ENCODE measurements at regions of chr1 and their contacts with region 1.

Region 1: GRCh38 chr1:9110669-9111356 is 18.1 kb downstream of the GPR157 start:
- DNase-seq: peak; percentile 34
- H3K4me3 ChIP-seq: no peak overlapping the region
- CTCF ChIP-seq: peak; percentile 92

Region 2: GRCh38 chr1:8910914-8911313 is 199.9 kb before region 1 on chr1:
- CTCF ChIA-PET with region 1: interaction called, 267 read pairs
- POLR2A ChIA-PET with region 1: no interaction called
- DNase-seq: no peak
- H3K4me3 ChIP-seq: no peak overlapping the region
- CTCF ChIP-seq: no peak

Region 3: GRCh38 chr1:8953448-8953847 is 157.4 kb before region 1 on chr1:
- CTCF ChIA-PET with region 1: no interaction called
- POLR2A ChIA-PET with region 1: no interaction called
- DNase-seq: no peak
- H3K4me3 ChIP-seq: no peak overlapping the region
- CTCF ChIP-seq: no peak

Region 4: GRCh38 chr1:9128520-9129265 is 17.9 kb after region 1 on chr1 and contains the start of gene GPR157:
- CTCF ChIA-PET with region 1: interaction called, 45 read pairs
- POLR2A ChIA-PET with region 1: no interaction called
- DNase-seq: no peak
- H3K4me3 ChIP-seq: peak within 1 kb of the TSS; percentile 57
- CTCF ChIP-seq: peak; percentile 21

Region 5: GRCh38 chr1:9181176-9181906 is 70.5 kb after region 1 on chr1:
- CTCF ChIA-PET with region 1: interaction called, 13 read pairs
- POLR2A ChIA-PET with region 1: no interaction called
- DNase-seq: no peak
- H3K4me3 ChIP-seq: peak overlapping the region; percentile 87
- CTCF ChIP-seq: peak; percentile 99

Region 6: DNA sequence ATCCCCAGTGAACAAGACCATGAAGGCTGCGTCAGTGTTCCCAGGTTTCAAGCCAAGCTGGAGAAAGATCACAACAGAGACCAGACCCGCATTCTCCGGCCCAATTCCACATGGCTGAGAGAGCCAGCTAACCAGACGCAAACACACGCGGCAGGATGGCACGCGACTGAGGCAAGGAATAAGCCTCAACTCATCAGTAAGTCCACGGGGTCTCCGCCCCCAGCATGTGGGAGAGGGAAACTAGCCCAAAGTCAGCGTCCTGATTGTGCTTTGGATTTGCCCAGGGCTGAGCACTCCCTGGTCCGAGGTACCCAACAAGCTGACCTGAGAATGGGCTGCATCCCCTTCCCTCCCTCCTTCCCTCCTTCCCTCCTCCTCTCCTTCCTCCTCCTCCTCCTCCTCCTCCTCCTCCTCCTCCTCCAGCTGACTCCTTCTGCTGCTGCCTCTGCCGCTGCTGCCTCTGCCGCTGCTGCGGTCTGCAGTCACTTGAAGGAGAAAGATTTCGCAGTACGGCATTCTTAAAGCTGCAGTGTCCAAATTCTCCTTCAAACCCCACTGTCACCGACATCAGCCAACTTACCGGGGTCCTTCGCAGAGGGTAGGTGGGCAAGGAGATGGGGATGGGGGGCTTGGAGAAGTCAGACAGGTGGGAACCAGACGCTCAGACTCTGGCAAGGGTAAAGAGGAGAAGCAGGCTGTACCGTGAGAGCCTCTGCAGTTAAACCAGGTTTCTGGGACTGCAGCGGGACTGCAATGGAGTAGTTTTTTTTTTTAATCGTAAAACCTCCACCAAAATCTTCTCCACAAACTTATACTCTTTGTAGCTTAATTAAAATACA is 90.8 kb after region 1 on chr1:
- CTCF ChIA-PET with region 1: interaction called, 48 read pairs
- POLR2A ChIA-PET with region 1: no interaction called
- DNase-seq: no peak
- H3K4me3 ChIP-seq: peak overlapping the region; percentile 66
- CTCF ChIP-seq: no peak

Region 7: DNA sequence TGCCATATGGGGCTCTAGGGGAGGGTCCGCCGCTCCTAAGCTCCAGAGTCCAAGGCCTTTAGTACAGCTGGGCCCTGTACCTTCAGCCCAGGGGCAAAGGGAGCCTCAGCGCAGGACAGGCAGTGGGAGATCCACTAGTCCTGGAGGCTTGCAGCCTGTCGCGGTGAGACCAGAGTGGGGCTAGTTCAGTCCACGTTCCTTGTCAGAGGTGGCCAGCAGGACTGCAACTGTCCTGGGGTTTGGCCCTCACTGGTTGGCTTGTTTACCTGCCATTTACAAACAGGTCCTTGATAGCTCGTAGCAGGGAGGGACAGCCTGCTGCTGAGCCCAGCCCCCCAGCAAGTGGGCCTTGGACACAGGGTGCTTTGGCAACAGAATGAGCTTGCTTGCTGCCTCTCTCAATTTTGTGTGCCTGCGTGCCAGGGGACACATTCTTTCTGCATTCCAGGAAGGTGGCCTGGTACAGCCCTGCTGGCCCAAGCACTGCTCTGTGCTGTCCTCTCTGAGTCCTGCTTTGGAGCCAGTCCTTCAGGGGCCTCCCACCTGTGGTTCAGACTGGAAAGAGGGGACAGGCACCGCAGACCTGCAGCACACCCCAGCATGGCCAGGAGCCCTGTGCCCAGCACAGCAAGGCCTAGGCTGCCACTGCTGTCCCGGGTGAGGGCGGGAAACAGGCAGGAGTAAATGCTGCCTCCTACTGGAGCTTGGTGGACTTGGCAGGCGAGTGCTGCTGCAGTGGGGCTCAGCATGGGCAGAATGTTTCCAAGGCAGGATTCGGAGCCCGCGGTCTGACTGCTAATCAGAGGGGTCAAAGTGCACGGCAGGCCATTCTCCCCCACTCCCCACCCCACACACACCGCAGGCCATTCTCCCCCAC is 139.0 kb after region 1 on chr1:
- CTCF ChIA-PET with region 1: interaction called, 16 read pairs
- POLR2A ChIA-PET with region 1: no interaction called
- DNase-seq: no peak
- H3K4me3 ChIP-seq: no peak overlapping the region
- CTCF ChIP-seq: peak; percentile 55

Region 8: GRCh38 chr1:9376886-9377333 is 266.1 kb after region 1 on chr1:
- CTCF ChIA-PET with region 1: no interaction called
- POLR2A ChIA-PET with region 1: no interaction called
- DNase-seq: no peak
- H3K4me3 ChIP-seq: no peak overlapping the region
- CTCF ChIP-seq: no peak

Measured in AG04449 (cell line).